ENCODE measurements at regions of chr11 and their contacts with region 1.

Region 1: DNA sequence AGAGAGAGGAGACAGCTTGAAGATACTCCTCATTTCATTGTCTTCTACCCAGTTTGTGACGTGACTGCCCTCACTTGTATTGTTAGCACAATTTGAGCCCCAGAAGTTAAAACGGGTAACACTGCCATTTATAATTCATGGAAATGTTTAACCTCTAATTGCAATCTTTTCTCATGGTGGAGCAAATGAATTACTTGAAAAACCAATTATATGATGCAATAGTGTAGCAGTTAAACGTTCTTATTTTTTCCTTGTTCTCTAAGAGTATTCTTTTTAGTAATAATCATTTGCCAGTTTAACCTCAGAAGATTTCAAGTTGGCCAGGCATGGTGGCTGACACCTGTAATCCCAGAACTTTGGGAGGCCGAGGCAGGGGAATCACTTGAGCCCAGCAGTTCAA is 56.6 kb downstream of the CDON start:
- DNase-seq: no peak

Region 2: DNA sequence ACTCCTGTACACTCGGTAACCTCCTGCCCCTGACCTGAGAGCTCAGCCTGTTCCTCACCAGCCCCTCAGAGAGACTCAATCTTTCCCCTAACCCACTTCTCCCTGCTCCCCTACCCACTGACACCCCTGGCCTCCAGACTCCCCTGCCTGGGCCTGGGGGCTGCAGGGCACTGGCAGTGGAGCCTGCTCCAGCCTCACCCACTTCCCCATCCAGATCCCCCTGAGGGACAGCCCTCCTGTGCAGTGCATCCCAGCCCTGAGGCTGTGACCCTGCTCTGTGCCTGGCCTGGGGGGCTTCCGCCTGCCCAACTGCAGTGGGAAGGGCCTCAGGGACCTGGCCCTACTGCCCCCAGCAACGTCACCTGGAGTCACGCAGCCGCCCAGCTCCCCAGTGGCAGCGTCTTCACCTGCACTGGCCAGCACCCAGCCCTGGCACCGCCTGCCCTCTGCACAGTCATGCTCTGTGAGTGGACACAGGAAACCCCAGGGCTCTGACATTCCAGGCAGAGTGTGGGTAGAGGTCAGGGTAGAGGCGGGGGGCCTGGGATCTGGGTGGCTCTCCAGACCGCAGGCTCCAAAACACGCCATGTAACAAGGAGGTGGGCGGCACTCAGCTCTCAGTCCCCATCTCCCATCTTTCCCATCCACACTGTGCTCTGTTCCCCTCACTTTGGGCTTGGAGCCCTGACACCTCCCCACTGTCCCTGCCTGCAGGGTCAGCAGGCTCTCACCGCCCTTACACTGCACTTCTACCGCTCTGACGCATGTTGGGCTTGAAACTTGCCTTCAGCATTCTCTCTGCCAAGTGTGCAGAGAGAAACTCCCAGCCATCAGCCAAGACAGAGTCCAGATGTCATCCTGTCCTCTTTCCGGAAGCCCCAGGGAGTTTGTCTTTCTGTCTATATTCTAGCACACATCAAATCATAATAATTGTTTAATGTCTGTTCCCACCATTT is 55.1 kb before region 1 on chr11:
- intact Hi-C with region 1: no loop called
- DNase-seq: peak; percentile 88

Region 3: DNA sequence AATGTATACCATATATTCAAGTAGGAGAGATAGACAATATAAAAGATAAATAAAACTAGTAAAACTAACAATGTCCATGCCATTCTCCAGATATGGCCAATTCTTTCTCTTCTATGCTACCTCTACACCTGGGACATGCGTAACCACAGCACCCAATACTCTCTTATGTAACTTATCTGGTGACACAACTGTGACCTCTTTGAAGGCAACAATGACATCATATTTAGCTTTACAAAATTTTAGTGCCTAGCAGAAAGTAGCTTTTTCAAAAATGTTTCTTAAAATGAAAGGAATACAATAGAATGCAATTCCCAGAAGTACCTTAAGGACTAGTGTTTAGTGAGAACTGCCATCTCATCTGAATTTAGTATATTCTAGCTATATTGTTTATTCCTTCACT is 19.8 kb after region 1 on chr11:
- intact Hi-C with region 1: loop called in 1 of 2 experiments (anchors 1 kb)
- DNase-seq: no peak

Region 4: GRCh38 chr11:126048198-126048597 is 42.1 kb after region 1 on chr11:
- intact Hi-C with region 1: no loop called
- DNase-seq: no peak

Measured in posterior vena cava (tissue), 2 donors.